Transverse colon (tissue), 4 donors: ENCODE measurements at regions of chr10 and their contacts with region 1.

Region 1: GRCh38 chr10:73983096-73984047 is 14.5 kb upstream of the VCL start:
- DNase-seq: no peak
- H3K4me3 ChIP-seq: no peak overlapping the region
- H3K27ac ChIP-seq: no peak overlapping the region
- H3K4me1 ChIP-seq: peaks cover 0 to 10% (median 2%) of the 10 kb centered on the region in 4 donors
- H3K27me3 ChIP-seq: no peaks in the 10 kb centered on the region
- CTCF ChIP-seq: no peak
- EP300 ChIP-seq: no peak
- POLR2A ChIP-seq: no peak

Region 2: DNA sequence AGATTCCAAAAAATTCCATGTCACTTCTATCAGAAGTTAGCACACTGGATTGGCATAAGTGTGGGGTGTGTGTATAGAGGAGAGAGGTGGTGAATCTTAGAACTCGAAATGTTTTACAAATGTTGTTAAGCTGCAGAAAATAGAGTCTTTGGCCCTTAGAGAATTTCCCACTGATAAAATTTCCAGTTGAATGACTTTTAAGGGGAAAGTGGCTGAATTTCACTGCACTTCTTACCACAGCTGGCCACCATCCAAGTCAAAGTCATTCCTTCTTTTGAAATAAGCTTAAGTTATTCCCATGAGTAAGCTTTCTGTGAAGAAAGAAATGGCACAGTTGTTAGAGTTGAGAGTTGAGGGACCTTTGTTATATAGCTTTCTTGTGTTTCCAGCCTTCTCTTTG is 28.4 kb after region 1 on chr10:
- in situ Hi-C with region 1: no loop called
- intact Hi-C with region 1: loop called (anchors 1 kb)
- DNase-seq: no peak
- H3K4me3 ChIP-seq: no peak overlapping the region
- H3K27ac ChIP-seq: peak overlapping the region; percentile 3 to 31 (median 20)
- H3K4me1 ChIP-seq: peaks cover 0 to 50% (median 25%) of the 10 kb centered on the region in 4 donors
- H3K27me3 ChIP-seq: no peaks in the 10 kb centered on the region
- CTCF ChIP-seq: no peak
- EP300 ChIP-seq: no peak
- POLR2A ChIP-seq: no peak